GM13976 (cell line): ENCODE measurements at regions of chr13 and their contacts with region 1.

Region 1: DNA sequence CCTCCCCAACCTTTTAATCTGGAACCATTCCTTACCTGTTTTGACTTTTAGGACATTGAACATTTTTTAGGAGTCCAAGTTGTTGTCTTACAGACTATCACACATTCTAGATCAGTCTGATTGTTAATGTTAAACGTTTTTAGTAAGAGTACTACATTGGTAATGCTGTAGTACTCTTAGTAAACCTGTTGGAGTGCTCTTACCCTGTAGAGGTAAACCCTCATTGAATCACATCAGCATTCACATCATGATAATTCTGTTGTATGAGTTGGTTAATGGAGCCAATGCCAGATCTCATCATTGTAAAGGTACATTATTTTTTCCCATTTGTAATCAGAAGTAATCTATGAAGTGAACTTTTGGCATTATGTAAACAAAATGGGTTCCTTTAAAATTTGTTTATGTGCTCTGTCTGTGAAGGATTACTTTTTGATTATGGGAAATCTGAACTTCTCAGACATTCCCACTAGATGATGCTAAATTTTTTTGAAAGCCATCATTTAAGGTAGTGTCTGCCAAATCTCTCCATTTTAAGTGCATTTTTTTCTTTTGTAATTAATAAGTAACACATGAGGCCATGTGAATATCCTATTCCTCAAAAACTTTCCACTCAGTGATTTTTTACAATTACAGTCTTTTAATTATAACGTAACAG is 55.2 kb downstream of the VWA8 start:
- DNase-seq: peak; percentile 49
- CTCF ChIP-seq: peak; percentile 8

Region 2: DNA sequence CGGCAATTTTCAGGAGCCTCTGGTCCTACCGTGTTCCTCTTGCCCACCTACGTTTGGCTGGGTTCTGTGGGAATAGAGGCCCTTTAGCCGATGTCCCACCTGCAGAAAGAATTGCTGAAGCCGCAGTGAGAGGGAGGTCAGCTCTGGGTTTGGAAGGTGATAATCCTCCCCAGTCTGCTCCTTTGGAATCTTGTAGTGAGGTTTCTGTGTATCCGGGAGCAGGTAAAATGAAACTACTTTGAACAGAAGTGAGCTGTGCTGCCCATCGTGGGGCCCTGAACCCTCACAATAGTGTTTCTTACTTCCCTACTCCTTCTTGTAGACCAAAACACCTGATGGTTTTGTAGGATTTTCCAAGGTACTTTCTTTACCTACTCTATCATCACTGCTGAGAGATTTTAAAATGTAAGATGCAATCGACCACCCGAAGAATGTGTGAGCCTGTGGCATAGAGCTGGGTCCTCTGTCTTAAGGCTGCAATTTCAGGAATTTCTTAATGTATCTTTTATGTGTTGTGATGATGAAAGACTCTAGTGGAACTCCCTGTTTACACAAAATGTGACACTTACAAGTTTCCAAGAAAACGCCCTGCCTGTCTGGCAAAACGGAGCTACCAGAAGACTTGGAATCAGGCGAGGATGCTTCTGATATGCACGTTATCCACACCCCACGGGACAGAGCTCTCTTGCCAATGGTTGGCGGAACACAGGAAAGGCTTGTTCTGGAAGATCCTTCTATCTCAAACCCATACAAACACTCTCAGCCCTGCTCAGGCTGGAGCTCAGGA is 372.3 kb before region 1 on chr13:
- in situ Hi-C with region 1: no loop called
- DNase-seq: no peak
- CTCF ChIP-seq: no peak

Region 3: DNA sequence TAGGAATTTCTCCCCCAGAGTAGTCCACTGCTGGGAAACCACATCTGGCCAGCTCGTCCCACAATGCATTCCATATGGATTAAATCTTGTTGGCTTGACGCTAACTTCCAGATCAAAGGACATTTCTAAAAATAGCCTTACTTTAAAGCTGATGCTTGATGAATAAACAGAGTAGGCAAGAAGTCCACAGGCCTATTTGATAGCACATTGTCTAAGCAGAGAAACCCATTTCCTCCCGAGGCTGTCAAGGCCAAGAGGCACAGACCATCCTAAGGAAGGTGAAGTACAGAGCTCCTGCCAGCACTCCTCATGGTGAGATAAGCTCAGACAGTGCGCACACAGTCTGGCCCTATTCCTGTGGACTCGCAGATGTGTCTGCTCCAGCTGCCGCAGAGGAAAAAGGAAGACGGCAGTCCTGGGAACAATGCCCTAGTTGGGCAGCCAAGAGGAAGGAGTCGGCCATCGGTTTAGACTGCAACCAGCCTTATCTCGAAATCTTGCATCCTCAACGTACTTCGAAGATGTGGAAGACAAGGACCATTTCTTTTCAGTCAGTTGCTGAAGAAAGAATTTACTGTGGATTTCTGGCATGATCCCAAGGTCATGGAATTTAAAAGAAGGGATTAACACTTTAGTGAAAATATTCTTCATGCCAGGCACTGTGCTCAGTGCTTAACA is 291.6 kb before region 1 on chr13:
- in situ Hi-C with region 1: no loop called
- DNase-seq: no peak
- CTCF ChIP-seq: no peak

Region 4: GRCh38 chr13:42102961-42103865 is 197.5 kb after region 1 on chr13:
- in situ Hi-C with region 1: loop called (anchors 10 kb)
- DNase-seq: no peak
- CTCF ChIP-seq: no peak

Region 5: DNA sequence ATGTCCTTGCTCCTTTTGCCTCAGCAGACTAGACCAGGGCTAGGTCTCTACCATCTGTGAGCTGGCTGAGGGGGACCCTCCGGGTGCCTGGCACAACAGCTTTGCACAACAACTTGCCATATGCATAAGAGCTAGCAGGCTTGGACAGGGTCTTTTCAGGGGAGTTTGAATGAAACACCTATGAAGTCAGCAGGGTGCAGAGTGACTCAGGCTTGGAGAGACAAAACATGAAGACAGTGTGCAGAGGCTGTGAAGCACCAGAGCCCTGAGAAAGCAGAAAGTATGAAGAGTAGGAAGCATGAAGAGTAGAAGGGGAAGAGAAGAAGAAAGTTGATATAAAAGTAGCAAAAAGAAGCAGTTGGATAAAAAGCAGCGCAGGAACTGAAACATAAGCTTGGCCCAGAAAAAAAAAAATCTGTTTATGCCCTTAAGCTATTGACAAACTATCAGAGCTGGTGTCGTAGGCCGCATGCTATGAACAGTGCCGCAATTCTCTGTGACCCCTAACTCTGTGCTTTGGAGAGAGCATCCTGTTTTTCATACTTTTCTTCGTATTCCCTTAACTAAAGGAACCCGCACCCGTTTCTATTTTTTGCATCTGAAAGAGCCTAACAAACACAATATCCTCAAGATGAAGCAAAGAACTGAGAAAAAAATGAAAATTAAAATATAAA is 822.9 kb after region 1 on chr13:
- in situ Hi-C with region 1: no loop called
- DNase-seq: no peak
- CTCF ChIP-seq: no peak